ENCODE measurements at regions of chr13 and their contacts with region 1.

Region 1: GRCh38 chr13:79393564-79394249 is 12.3 kb downstream of the RBM26 start:
- DNase-seq: peak in 13 of 14 experiments; percentile 12 to 75 (median 41)
- ATAC-seq: peak; percentile 62
- H3K4me3 ChIP-seq: peak overlapping the region; percentile 42
- H3K4me3 Mint-ChIP-seq: peak overlapping the region; percentile 86
- H3K27ac ChIP-seq: peak overlapping the region; percentile 63 to 65
- H3K27ac Mint-ChIP-seq: peak overlapping the region; percentile 84
- H3K4me1 ChIP-seq: peaks cover 28% of the 10 kb centered on the region
- H3K4me1 Mint-ChIP-seq: peaks cover 75% of the 10 kb centered on the region
- H3K27me3 ChIP-seq: no peaks in the 10 kb centered on the region
- H3K27me3 Mint-ChIP-seq: no peaks in the 10 kb centered on the region
- CTCF ChIP-seq: no peak

Region 2: GRCh38 chr13:78137404-78138142 is 1256.1 kb before region 1 on chr13:
- CTCF ChIA-PET with region 1: no interaction called
- POLR2A ChIA-PET with region 1: no interaction called
- intact Hi-C with region 1: loop called in 1 of 2 experiments (anchors 5 kb)
- DNase-seq: peak in 4 of 14 experiments; percentile 10 to 55 (median 43)
- ATAC-seq: peak; percentile 65
- H3K4me3 ChIP-seq: no peak overlapping the region
- H3K4me3 Mint-ChIP-seq: no peak overlapping the region
- H3K27ac ChIP-seq: no peak overlapping the region
- H3K27ac Mint-ChIP-seq: no peak overlapping the region
- H3K4me1 ChIP-seq: peaks cover 7% of the 10 kb centered on the region
- H3K4me1 Mint-ChIP-seq: peaks cover 6% of the 10 kb centered on the region
- H3K27me3 ChIP-seq: no peaks in the 10 kb centered on the region
- H3K27me3 Mint-ChIP-seq: peaks cover 4% of the 10 kb centered on the region
- CTCF ChIP-seq: peak; percentile 79

Region 3: DNA sequence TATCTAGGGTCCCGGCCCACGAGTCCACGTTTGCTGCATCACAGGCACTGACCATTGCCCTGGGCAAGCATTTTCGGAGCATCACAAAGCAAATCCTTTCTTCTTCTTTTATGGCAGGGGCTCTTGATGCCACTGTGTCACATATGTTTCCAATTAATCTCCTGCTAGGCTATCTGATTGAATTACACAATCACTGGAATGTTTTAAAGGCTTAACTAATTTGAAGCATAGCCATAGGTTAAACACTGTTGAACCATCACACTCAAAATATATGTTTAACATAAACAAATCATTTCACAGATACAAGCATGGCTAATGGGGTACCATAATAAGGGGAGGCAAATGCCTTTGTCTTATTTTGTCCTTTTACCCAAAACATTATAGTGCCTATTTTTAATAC is 1128.6 kb before region 1 on chr13:
- CTCF ChIA-PET with region 1: no interaction called
- POLR2A ChIA-PET with region 1: no interaction called
- intact Hi-C with region 1: no loop called
- DNase-seq: no peak
- ATAC-seq: no peak
- H3K4me3 ChIP-seq: no peak overlapping the region
- H3K4me3 Mint-ChIP-seq: no peak overlapping the region
- H3K27ac ChIP-seq: no peak overlapping the region
- H3K27ac Mint-ChIP-seq: no peak overlapping the region
- H3K4me1 ChIP-seq: no peaks in the 10 kb centered on the region
- H3K4me1 Mint-ChIP-seq: no peaks in the 10 kb centered on the region
- H3K27me3 ChIP-seq: no peaks in the 10 kb centered on the region
- H3K27me3 Mint-ChIP-seq: no peaks in the 10 kb centered on the region
- CTCF ChIP-seq: no peak

Region 4: GRCh38 chr13:78658635-78659449 is 734.9 kb before region 1 on chr13 and contains the start of gene OBI1:
- CTCF ChIA-PET with region 1: no interaction called
- POLR2A ChIA-PET with region 1: no interaction called
- intact Hi-C with region 1: loop called in 1 of 2 experiments (anchors 10 kb)
- DNase-seq: peak; percentile 83 to 94 (median 87)
- ATAC-seq: peak; percentile 94
- H3K4me3 ChIP-seq: peak within 1 kb of the TSS; percentile 96
- H3K4me3 Mint-ChIP-seq: peak within 1 kb of the TSS; percentile 98
- H3K27ac ChIP-seq: peak within 1 kb of the TSS in 1 of 2 donors; percentile 56
- H3K27ac Mint-ChIP-seq: peak within 1 kb of the TSS; percentile 91
- H3K4me1 ChIP-seq: peaks cover 14% of the 10 kb centered on the region
- H3K4me1 Mint-ChIP-seq: peaks cover 43% of the 10 kb centered on the region
- H3K27me3 ChIP-seq: no peaks in the 10 kb centered on the region
- H3K27me3 Mint-ChIP-seq: no peaks in the 10 kb centered on the region
- CTCF ChIP-seq: no peak
- total RNA-seq, gene OBI1: 2.6 TPM

Region 5: GRCh38 chr13:78867655-78868054 is 526.1 kb before region 1 on chr13:
- CTCF ChIA-PET with region 1: no interaction called
- POLR2A ChIA-PET with region 1: no interaction called
- intact Hi-C with region 1: no loop called
- DNase-seq: no peak
- ATAC-seq: no peak
- H3K4me3 ChIP-seq: no peak overlapping the region
- H3K4me3 Mint-ChIP-seq: no peak overlapping the region
- H3K27ac ChIP-seq: no peak overlapping the region
- H3K27ac Mint-ChIP-seq: no peak overlapping the region
- H3K4me1 ChIP-seq: no peaks in the 10 kb centered on the region
- H3K4me1 Mint-ChIP-seq: no peaks in the 10 kb centered on the region
- H3K27me3 ChIP-seq: no peaks in the 10 kb centered on the region
- H3K27me3 Mint-ChIP-seq: peaks cover 12% of the 10 kb centered on the region
- CTCF ChIP-seq: no peak

Region 6: GRCh38 chr13:79336966-79337365 is 56.7 kb before region 1 on chr13:
- CTCF ChIA-PET with region 1: interaction called, 6 read pairs
- POLR2A ChIA-PET with region 1: no interaction called
- intact Hi-C with region 1: loop called in 1 of 2 experiments (anchors 10 kb)
- DNase-seq: no peak
- ATAC-seq: no peak
- H3K4me3 ChIP-seq: no peak overlapping the region
- H3K4me3 Mint-ChIP-seq: no peak overlapping the region
- H3K27ac ChIP-seq: no peak overlapping the region
- H3K27ac Mint-ChIP-seq: no peak overlapping the region
- H3K4me1 ChIP-seq: no peaks in the 10 kb centered on the region
- H3K4me1 Mint-ChIP-seq: no peaks in the 10 kb centered on the region
- H3K27me3 ChIP-seq: no peaks in the 10 kb centered on the region
- H3K27me3 Mint-ChIP-seq: no peaks in the 10 kb centered on the region
- CTCF ChIP-seq: no peak

Region 7: GRCh38 chr13:79382545-79383289 is 11.0 kb before region 1 on chr13:
- CTCF ChIA-PET with region 1: interaction called, 14 read pairs
- POLR2A ChIA-PET with region 1: interaction called, 7 read pairs
- intact Hi-C with region 1: no loop called
- DNase-seq: peak in 1 of 14 experiments; percentile 41
- ATAC-seq: peak; percentile 43
- H3K4me3 ChIP-seq: no peak overlapping the region
- H3K4me3 Mint-ChIP-seq: peak overlapping the region; percentile 71
- H3K27ac ChIP-seq: no peak overlapping the region
- H3K27ac Mint-ChIP-seq: peak overlapping the region; percentile 46
- H3K4me1 ChIP-seq: peaks cover 7% of the 10 kb centered on the region
- H3K4me1 Mint-ChIP-seq: peaks cover 70% of the 10 kb centered on the region
- H3K27me3 ChIP-seq: no peaks in the 10 kb centered on the region
- H3K27me3 Mint-ChIP-seq: no peaks in the 10 kb centered on the region
- CTCF ChIP-seq: no peak

Region 8: GRCh38 chr13:79405829-79406596 is 12.3 kb after region 1 on chr13 and contains the start of gene RBM26:
- CTCF ChIA-PET with region 1: interaction called, 10 read pairs
- POLR2A ChIA-PET with region 1: interaction called, 43 read pairs
- intact Hi-C with region 1: loop called (anchors 1 to 2 kb)
- DNase-seq: peak; percentile 87 to 97 (median 92)
- ATAC-seq: peak; percentile 86
- H3K4me3 ChIP-seq: peak within 1 kb of the TSS; percentile 68
- H3K4me3 Mint-ChIP-seq: peak within 1 kb of the TSS; percentile 95
- H3K27ac ChIP-seq: peak within 1 kb of the TSS; percentile 93 to 95
- H3K27ac Mint-ChIP-seq: no peak within 1 kb of the TSS
- H3K4me1 ChIP-seq: peaks cover 21% of the 10 kb centered on the region
- H3K4me1 Mint-ChIP-seq: peaks cover 44% of the 10 kb centered on the region
- H3K27me3 ChIP-seq: no peaks in the 10 kb centered on the region
- H3K27me3 Mint-ChIP-seq: no peaks in the 10 kb centered on the region
- CTCF ChIP-seq: no peak
- total RNA-seq, gene RBM26: 67.3 to 68.0 TPM